H1 (cell line): ENCODE measurements at regions of chr3 and their contacts with region 1.

Region 1: GRCh38 chr3:8301728-8302462 is 199.7 kb upstream of the LMCD1 start:
- DNase-seq: no peak
- H3K4me3 ChIP-seq: no peak overlapping the region
- H3K27ac ChIP-seq: no peak overlapping the region
- H3K4me1 ChIP-seq: no peaks in the 10 kb centered on the region
- H3K27me3 ChIP-seq: no peaks in the 10 kb centered on the region
- CTCF ChIP-seq: peak in 2 of 3 experiments; percentile 53 to 69; a peak in 2 of 4 replicates
- EP300 ChIP-seq: no peak
- POLR2A ChIP-seq: no peak
- RAD21 ChIP-seq: peak; percentile 78 to 82

Region 2: GRCh38 chr3:8111069-8111798 is 190.7 kb before region 1 on chr3:
- CTCF ChIA-PET with region 1: interaction called, 15 read pairs
- POLR2A ChIA-PET with region 1: no interaction called
- DNase-seq: peak; percentile 34 to 86
- H3K4me3 ChIP-seq: no peak overlapping the region
- H3K27ac ChIP-seq: no peak overlapping the region
- H3K4me1 ChIP-seq: peaks cover 0 to 21% (median 8%) of the 10 kb centered on the region in 4 experiments; a peak in 5 of 7 replicates
- H3K27me3 ChIP-seq: no peaks in the 10 kb centered on the region
- CTCF ChIP-seq: peak; percentile 42 to 88 (median 87)
- EP300 ChIP-seq: no peak
- POLR2A ChIP-seq: no peak
- RAD21 ChIP-seq: peak; percentile 97 to 98

Region 3: DNA sequence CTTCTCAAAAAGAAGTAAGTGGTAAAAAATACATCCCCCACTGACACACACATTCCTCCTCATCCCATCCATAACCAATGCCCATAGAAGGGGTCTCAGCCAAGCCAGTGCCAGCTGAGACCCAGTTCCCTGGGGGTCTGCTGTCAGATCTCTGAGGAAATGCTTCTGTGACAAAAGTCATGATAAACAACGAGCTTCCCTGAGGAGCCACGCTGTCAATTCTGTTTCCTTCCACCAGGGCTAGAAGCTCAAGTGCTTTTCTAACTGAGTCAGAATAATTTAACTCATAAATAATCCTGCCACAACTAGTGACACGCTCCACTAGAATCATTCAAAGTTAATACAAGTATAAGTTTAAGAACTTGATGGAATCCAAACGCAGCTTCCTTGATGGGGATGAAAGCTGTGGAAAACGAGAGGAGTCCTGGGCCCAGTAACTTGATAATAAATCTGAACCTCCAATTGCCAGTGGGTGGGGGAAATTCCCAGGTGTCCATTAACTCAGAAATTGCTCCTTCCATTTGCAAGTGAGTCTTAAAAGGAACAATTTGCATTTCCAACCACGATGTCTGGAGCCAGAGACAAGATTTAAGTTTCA is 149.0 kb before region 1 on chr3:
- CTCF ChIA-PET with region 1: interaction called, 11 read pairs
- POLR2A ChIA-PET with region 1: no interaction called
- DNase-seq: no peak
- H3K4me3 ChIP-seq: no peak overlapping the region
- H3K27ac ChIP-seq: no peak overlapping the region
- H3K4me1 ChIP-seq: no peaks in the 10 kb centered on the region
- H3K27me3 ChIP-seq: no peaks in the 10 kb centered on the region
- CTCF ChIP-seq: peak in 1 of 3 experiments; percentile 15; a peak in 1 of 4 replicates
- EP300 ChIP-seq: no peak
- POLR2A ChIP-seq: no peak
- RAD21 ChIP-seq: peak in 1 of 2 experiments; percentile 2; a peak in 1 of 4 replicates

Region 4: GRCh38 chr3:8278448-8278847 is 23.4 kb before region 1 on chr3:
- CTCF ChIA-PET with region 1: interaction called, 18 read pairs
- POLR2A ChIA-PET with region 1: no interaction called
- DNase-seq: no peak
- H3K4me3 ChIP-seq: no peak overlapping the region
- H3K27ac ChIP-seq: no peak overlapping the region
- H3K4me1 ChIP-seq: peaks cover 4 to 9% (median 7%) of the 10 kb centered on the region in 4 experiments
- H3K27me3 ChIP-seq: peaks cover 0 to 1% (median 0%) of the 10 kb centered on the region in 4 experiments; a peak in 1 of 7 replicates
- CTCF ChIP-seq: peak in 2 of 3 experiments; percentile 17 to 30; a peak in 2 of 4 replicates
- EP300 ChIP-seq: no peak
- POLR2A ChIP-seq: no peak
- RAD21 ChIP-seq: no peak; a peak in 1 of 4 replicates

Region 5: DNA sequence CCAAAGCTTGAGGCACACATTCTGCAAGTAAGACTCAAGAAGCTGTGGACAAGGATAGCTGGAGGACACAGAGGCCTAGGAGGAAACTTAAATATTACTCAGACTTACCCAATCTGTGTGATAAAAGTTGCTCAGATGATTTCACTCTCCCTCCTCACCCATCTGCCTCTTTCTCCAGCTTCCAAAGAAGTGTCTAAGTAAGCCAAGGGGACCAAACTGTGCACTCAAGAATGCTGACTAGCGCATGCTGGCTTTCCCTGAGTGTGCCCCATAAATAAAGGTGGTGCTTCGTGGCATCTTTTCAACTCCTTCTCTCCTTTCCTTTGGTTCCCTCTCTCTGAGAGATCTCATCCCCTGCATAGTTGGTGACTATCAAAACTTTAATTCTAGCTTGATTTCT is 11.3 kb before region 1 on chr3:
- CTCF ChIA-PET with region 1: interaction called, 36 read pairs
- POLR2A ChIA-PET with region 1: no interaction called
- DNase-seq: no peak
- H3K4me3 ChIP-seq: no peak overlapping the region
- H3K27ac ChIP-seq: no peak overlapping the region
- H3K4me1 ChIP-seq: peaks cover 0 to 4% (median 0%) of the 10 kb centered on the region in 4 experiments; a peak in 1 of 7 replicates
- H3K27me3 ChIP-seq: no peaks in the 10 kb centered on the region
- CTCF ChIP-seq: no peak
- EP300 ChIP-seq: no peak
- POLR2A ChIP-seq: no peak
- RAD21 ChIP-seq: no peak

Region 6: GRCh38 chr3:8324740-8325139 is 22.8 kb after region 1 on chr3:
- CTCF ChIA-PET with region 1: interaction called, 13 read pairs
- POLR2A ChIA-PET with region 1: no interaction called
- DNase-seq: peak in 1 of 2 experiments; percentile 68
- H3K4me3 ChIP-seq: no peak overlapping the region
- H3K27ac ChIP-seq: no peak overlapping the region
- H3K4me1 ChIP-seq: peaks cover 6 to 11% (median 7%) of the 10 kb centered on the region in 4 experiments; a peak in 6 of 7 replicates
- H3K27me3 ChIP-seq: no peaks in the 10 kb centered on the region
- CTCF ChIP-seq: peak; percentile 67 to 85 (median 78)
- EP300 ChIP-seq: no peak
- POLR2A ChIP-seq: no peak
- RAD21 ChIP-seq: peak; percentile 76

Region 7: GRCh38 chr3:8416965-8417364 is 115.1 kb after region 1 on chr3:
- CTCF ChIA-PET with region 1: interaction called, 20 read pairs
- POLR2A ChIA-PET with region 1: no interaction called
- DNase-seq: peak in 1 of 2 experiments; percentile 50
- H3K4me3 ChIP-seq: no peak overlapping the region
- H3K27ac ChIP-seq: no peak overlapping the region
- H3K4me1 ChIP-seq: no peaks in the 10 kb centered on the region
- H3K27me3 ChIP-seq: no peaks in the 10 kb centered on the region
- CTCF ChIP-seq: no peak
- EP300 ChIP-seq: no peak
- POLR2A ChIP-seq: no peak
- RAD21 ChIP-seq: no peak

Region 8: DNA sequence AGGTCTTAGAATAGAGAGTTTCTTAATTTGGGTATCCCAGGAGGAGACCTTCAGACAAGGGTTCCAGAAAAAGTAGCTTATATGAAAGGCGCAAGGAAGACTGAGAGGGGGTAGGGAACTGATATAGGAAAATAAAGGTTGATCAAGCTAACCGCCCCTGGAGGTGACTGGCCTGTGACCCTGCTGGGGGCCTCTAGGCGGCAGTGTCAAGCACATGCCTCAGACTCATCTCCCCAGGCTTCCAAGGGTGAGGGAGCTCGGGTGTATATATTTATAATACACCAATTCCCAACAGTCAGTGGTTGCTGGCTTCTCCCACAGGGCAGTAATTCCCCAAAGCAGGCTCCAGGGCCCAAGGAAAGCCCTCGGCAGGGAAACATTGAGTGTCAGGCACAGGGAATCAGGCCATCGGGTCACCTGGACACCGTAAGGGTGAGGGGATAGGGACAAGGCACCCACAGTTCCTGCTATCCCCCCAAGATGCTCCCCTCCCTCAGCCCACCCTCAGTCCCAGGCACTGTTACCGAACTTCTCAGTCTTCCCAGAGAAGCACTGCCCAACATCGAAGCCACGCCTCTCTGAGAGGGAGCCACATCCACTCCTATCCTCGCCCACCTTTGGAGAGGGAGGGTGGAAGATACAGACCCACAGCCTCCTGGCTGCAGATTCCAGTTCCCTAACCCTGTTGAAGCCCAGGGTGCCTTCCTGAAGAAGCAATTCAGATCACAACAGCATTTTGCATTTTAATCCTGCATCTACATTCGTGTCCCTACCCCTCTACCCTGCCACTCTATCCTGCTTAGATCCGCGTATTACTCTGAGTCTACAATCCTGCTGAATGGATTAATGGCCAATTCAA is 412.2 kb after region 1 on chr3:
- CTCF ChIA-PET with region 1: no interaction called
- POLR2A ChIA-PET with region 1: no interaction called
- DNase-seq: peak in 1 of 2 experiments; percentile 67
- H3K4me3 ChIP-seq: no peak overlapping the region
- H3K27ac ChIP-seq: no peak overlapping the region
- H3K4me1 ChIP-seq: no peaks in the 10 kb centered on the region; a peak in 1 of 7 replicates
- H3K27me3 ChIP-seq: peaks cover 39 to 66% (median 63%) of the 10 kb centered on the region in 4 experiments
- CTCF ChIP-seq: peak; percentile 73 to 77 (median 77)
- EP300 ChIP-seq: no peak
- POLR2A ChIP-seq: no peak
- RAD21 ChIP-seq: peak; percentile 45 to 63